ENCODE measurements at regions of chr7 and their contacts with region 1.

Region 1: DNA sequence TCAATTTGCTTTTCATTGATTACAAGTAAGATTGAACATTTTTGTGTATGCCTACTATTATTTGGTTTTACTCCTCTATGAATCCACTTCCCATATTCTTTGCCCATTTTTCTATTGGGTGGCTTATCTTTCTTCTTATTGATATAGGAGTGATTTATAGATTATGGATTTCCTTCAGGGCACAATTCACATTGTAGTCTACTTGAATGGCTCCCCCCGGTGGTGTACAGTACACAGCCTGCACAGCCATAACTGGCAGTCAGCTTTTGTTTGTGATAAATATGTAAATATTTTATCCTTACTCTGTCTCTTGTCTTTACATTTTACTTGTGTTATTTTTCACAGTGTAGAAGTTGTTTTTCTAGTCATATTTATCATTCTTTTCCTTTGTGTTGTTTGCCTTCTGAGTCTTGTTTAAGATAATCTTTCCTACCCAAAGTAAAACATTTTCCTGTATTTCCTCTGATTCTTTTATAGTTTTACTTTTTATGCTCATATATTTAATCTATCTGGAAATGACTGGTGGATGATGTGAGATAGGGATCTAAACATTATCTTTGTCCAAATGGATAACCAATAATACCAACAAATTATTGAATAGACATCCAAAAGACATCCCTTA is 23.9 kb upstream of the CALD1 start:
- DNase-seq: no peak
- H3K4me3 ChIP-seq: no peak overlapping the region
- CTCF ChIP-seq: peak; percentile 69

Region 2: GRCh38 chr7:134701272-134701671 is 54.2 kb before region 1 on chr7:
- CTCF ChIA-PET with region 1: interaction called, 164 read pairs
- POLR2A ChIA-PET with region 1: no interaction called
- DNase-seq: no peak
- H3K4me3 ChIP-seq: no peak overlapping the region
- CTCF ChIP-seq: no peak

Region 3: DNA sequence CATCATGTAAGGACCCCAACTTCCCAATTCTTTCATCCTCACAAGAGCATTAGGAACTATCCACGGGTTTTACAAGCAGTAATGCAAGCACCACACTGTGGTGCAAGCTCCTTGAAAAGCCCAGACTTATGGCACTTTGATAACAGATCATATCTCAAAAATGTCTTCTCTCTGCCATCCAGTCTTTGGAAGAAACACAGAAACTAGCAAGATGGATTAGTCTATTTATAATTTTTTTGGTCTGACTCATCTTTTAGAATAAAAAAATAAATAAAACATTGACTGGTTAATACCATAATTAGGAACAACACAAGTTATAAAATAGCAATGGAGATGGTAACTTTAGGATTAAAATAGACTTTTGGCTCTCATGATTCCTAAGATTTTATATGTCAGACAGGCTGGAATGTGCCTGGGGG is 25.1 kb before region 1 on chr7:
- CTCF ChIA-PET with region 1: interaction called, 44 read pairs
- POLR2A ChIA-PET with region 1: no interaction called
- DNase-seq: peak; percentile 70
- H3K4me3 ChIP-seq: no peak overlapping the region
- CTCF ChIP-seq: no peak

Region 4: DNA sequence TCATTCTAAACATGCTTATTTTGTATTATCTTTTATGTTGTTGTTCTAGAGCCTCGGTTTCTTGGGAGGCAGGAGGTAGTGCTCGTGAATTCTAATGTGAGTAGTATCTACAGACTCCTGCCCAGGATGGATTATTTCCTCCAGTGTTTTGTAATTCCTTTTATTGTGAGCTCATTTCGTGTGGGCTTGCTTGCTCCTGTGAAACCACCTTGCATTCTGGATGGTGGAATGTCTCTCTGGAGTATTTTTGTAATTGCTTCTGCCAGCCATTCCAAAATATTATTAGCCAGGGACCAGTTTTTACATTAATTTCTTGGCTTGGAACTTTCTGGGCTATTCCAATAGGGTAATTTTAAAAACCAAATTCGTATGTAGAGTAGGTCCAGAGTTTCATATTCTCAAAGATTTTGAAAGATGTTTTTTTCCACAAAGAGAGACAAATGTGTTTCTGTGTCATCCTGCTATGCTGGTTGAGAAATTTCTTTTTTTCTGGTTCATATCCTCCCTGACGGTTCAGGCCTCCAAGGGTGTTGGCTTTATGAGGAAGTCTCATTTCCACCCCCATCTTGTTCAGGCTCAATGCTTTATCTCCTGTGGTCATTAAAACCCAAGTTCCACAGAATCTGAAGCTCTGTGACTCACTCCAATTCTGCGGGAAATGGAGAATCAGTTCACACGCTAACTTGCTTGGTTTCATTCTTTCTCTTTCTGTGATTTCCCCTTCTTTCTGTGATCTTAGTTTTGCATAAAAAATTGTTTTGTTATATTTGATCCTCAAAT is 17.8 kb before region 1 on chr7:
- CTCF ChIA-PET with region 1: interaction called, 50 read pairs
- POLR2A ChIA-PET with region 1: interaction called, 8 read pairs
- DNase-seq: peak; percentile 90
- H3K4me3 ChIP-seq: no peak overlapping the region
- CTCF ChIP-seq: no peak

Region 5: GRCh38 chr7:134742688-134743350 is 12.7 kb before region 1 on chr7:
- CTCF ChIA-PET with region 1: interaction called, 50 read pairs
- POLR2A ChIA-PET with region 1: interaction called, 8 read pairs
- DNase-seq: peak; percentile 89
- H3K4me3 ChIP-seq: no peak overlapping the region
- CTCF ChIP-seq: no peak

Region 6: DNA sequence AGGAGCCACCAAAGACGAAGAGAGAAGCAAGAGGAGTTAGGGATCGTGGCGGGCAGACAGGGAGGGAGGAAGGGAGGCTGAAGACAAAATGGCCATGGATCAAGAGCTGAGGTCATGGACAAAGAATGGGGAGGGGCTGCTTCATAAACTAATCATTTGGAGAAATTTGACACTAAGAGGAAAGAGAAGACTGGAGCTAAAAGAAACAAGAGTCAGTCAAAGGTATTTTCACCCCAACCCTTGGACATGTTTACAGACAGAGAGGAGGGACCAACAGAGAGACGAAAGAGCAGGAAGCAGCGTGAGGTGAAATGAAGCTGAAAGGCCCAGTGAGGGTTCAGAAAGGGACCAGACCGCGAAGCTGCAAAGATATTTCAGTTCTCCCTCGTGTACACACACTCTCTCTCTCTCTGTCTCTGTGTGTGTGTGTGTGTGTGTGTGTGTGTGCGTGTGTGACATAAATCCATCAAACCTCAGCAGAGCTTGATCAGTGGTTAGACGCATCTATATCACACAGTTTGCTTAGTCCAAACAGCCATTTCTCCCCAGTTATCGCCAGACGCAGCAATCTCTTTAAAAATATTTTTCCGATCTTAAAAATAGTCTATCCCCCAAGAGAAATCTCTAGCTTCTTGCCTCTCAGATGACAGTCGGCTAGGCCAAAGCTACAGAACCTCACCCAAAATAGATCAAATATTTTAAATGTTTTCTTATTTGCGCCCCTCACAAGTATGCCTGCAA is 11.4 kb after region 1 on chr7:
- CTCF ChIA-PET with region 1: interaction called, 25 read pairs
- POLR2A ChIA-PET with region 1: interaction called, 3 read pairs
- DNase-seq: no peak
- H3K4me3 ChIP-seq: no peak overlapping the region
- CTCF ChIP-seq: no peak

Region 7: DNA sequence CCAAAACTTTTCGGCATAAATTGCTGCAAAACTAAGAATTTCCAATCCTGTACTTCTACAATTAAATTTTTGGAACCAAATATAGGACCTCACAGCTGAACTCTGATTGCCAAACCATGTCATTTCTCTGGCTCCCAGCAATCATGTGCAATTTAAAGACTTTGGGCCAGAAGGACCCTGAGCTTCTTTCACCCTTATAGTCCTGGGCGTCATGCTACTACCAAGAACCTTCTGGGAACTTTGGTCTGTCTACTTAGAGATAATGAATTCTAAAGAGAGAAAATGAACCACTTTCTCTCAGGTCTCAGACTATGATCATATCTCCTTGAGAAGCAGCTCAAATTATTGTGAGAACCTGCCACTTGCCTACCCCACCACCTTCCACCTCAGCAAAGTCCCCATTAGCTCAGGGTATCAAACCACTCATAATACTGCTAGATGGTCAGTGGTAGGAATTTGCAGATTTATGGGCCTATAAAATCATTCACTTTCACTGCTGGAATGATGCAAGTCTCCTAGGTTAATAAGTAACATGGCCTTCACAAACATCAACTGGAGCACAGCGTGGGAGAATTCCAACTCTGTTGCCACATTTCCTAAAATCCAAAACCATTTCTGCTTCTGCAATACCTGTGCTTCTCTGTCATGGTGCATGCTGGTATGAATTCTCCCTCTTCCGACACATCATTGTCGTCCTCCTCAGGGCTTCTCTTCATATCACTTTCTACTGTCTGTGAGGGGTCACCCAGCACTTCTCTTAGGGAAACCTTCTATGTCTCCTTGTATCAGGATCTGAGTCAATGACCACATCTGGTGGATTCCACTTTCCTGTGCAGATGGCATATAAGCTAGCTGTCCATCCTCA is 462.4 kb after region 1 on chr7:
- CTCF ChIA-PET with region 1: no interaction called
- POLR2A ChIA-PET with region 1: no interaction called
- DNase-seq: no peak
- H3K4me3 ChIP-seq: no peak overlapping the region
- CTCF ChIP-seq: no peak